Sciatic nerve (tissue), 2 donors: ENCODE measurements at regions of chr6 and their contacts with region 1.

Region 1: DNA sequence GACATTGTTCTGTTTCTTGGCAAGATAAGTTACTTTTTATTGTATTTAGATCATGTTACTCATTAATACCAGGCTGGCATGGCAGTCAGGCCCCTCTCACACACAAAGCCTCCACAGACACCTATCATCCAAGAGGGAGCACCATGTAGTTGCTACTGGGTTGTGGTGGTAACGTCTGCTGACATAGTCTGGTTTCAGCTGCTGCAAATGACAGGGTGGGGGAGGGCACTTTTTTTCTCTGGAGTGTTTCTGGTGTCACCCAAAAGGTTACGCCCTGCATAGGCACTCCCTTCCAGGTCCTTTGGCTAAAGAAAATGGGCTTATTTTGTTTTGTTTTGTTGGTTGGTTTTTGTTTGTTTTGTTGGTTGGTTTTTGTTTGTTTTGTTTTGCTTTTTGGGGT is 236.4 kb upstream of the RIMS1 start:
- DNase-seq: no peak
- ATAC-seq: no peak

Region 2: DNA sequence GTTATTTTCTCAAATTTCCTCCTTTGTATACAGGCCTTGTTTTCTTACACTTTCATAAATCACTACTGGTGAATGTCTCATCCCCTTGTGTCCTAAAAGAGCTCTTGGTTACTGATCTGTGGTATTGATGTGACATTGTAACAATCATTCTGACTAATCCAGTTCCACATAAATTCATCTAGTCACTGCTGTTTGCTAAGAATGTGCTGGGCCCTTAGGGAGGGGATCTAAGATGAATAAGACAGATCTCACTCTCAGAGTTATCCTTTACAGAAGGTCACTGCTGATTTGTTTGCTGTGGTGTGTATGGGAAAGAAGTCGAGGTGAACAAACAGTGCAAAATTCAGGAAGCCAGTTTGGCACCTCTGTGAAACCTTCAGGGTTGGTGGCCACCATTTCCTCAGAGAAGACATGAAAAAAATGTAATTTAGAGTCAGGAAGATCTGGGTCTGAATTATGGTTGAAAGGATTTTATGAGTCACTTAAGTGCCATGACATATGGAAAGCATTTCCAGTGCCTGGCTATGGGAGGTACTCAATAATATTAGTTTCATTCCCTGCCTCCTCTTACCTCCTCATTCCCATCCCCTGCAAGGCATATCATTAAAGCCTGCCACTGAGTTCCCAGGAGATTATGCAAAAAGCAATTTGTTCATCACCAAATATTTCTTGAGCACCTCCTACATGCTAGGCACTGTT is 1468.9 kb before region 1 on chr6:
- intact Hi-C with region 1: loop called (anchors 5 kb)
- DNase-seq: no peak
- ATAC-seq: no peak

Region 3: DNA sequence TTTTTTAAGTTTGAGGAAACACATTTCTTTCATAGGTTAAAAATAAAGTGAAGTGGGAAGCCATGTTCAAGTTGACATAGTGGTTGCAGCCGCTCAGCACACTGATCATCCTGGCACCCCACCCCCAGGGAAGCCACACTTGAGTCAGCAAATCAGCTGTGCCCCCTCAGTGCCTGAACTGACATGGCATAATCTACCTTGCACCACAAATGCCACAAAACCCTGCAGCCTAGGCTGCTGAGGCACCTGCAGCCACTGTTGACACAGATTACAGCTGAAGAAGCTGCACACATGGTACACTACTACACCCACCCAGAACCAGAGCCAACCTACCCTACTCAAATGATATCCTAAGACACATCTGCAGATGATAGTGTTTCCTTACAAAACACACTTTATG is 158.9 kb after region 1 on chr6:
- intact Hi-C with region 1: no loop called
- DNase-seq: no peak
- ATAC-seq: no peak